Mammary epithelial cell (primary cell): ENCODE measurements at regions of chr1 and their contacts with region 1.

Region 1: GRCh38 chr1:213484758-213485157 is 433.7 kb downstream of the RPS6KC1 start:
- DNase-seq: no peak
- H3K4me3 ChIP-seq: no peak overlapping the region
- H3K27ac ChIP-seq: no peak overlapping the region
- H3K4me1 ChIP-seq: no peaks in the 10 kb centered on the region
- H3K27me3 ChIP-seq: peaks cover 4% of the 10 kb centered on the region
- CTCF ChIP-seq: no peak

Region 2: GRCh38 chr1:213393860-213394259 is 90.9 kb before region 1 on chr1:
- CTCF ChIA-PET with region 1: no interaction called
- dilution Hi-C with region 1: loop called (anchors 5 kb)
- in situ Hi-C with region 1: no loop called
- intact Hi-C with region 1: no loop called
- DNase-seq: no peak
- H3K4me3 ChIP-seq: no peak overlapping the region
- H3K27ac ChIP-seq: no peak overlapping the region
- H3K4me1 ChIP-seq: no peaks in the 10 kb centered on the region
- H3K27me3 ChIP-seq: no peaks in the 10 kb centered on the region
- CTCF ChIP-seq: no peak

Region 3: DNA sequence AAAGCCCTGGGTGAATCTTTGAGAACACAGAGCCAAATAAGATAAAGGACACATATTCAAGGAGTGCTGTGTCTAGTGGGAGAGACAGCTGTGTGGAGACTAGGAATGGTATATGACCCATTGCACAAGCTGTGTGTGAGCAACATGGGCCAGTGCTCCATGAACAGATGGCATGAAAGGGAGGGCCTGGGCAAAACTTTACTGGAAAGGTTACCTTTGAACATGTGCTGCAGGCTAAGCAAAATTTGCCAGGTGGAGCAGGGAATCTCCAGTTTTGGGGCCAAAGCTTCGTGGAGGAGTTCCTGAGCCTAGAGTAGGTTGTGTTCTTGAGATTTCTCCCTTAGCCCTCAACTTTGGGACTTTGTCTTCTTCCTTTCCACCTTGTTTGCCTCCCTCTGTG is 56.9 kb after region 1 on chr1:
- CTCF ChIA-PET with region 1: no interaction called
- dilution Hi-C with region 1: loop called (anchors 5 kb)
- in situ Hi-C with region 1: no loop called
- intact Hi-C with region 1: no loop called
- DNase-seq: no peak
- H3K4me3 ChIP-seq: no peak overlapping the region
- H3K27ac ChIP-seq: no peak overlapping the region
- H3K4me1 ChIP-seq: no peaks in the 10 kb centered on the region
- H3K27me3 ChIP-seq: no peaks in the 10 kb centered on the region
- CTCF ChIP-seq: no peak